Activated CD4-positive, alpha-beta T cell treated with anti-CD3 and anti-CD28 coated beads for 36 hours (primary cell): ENCODE measurements at regions of chr17 and their contacts with region 1.

Region 1: DNA sequence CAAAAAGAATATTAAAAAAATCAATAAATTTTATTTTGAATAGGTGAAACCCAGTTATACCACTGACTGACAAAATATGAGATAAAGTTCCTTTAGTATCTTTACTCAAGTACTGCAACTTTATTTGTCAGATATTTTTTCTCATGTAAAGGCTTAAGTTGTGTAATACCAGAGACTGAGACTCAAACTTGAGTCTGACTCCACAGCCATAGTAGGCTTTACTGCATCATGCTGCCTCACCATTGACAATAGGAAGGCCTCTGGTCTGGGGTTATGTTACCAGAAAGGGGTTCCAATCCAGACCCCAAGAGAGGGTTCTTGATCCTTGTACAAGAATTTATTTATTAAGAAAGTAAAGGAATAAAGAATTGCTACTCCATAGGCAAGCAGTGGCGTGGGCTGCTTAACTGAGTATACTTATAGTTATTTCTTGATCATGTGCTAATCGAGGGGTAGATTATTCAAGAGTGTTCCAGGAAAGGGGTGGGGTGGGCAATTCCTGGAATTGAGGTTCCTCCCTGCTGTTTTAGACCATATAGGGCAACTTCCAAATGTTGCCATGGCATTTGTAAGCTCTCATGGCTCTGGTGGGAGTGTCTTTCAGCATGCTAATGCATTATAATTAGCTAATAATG is 187.4 kb upstream of the WSB1 start:
- DNase-seq: no peak
- ATAC-seq: no peak
- H3K4me3 Mint-ChIP-seq: no peak overlapping the region
- H3K27ac Mint-ChIP-seq: no peak overlapping the region
- H3K4me1 Mint-ChIP-seq: no peaks in the 10 kb centered on the region
- H3K27me3 Mint-ChIP-seq: peaks cover 2% of the 10 kb centered on the region

Region 2: DNA sequence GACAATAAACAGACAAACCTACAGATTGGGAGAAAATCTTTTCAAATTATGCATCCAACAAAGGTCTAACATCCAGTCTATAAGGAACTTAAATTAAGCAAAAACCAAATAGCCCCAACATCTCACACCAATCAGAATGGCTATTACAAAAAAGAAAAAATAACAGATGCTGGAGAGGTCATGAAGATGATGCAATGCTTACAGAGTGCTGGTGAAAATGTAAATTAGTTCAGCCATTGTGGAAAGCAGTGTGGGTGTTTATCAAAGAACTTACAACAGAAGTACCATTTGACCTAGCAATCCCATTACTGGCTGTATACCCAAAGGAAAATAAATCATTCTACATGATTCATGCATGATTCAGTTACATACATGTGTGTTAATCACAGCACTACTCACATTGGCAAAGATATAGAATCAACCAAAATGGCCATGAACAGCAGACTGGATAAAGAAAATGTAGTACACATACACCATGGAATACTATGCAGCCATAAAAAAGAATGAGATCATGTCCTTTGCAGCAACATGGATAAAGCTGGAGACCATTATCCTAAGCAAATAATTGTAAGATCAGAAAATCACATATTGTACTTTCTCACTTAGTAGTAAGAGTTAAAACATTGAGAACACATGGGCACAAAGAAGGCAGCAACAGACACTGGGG is 36.5 kb before region 1 on chr17:
- CTCF ChIA-PET with region 1: no interaction called
- POLR2A ChIA-PET with region 1: no interaction called
- intact Hi-C with region 1: loop called in 1 of 2 experiments (anchors 10 kb)
- DNase-seq: no peak
- ATAC-seq: no peak
- H3K4me3 Mint-ChIP-seq: no peak overlapping the region
- H3K27ac Mint-ChIP-seq: no peak overlapping the region
- H3K4me1 Mint-ChIP-seq: no peaks in the 10 kb centered on the region
- H3K27me3 Mint-ChIP-seq: no peaks in the 10 kb centered on the region

Region 3: DNA sequence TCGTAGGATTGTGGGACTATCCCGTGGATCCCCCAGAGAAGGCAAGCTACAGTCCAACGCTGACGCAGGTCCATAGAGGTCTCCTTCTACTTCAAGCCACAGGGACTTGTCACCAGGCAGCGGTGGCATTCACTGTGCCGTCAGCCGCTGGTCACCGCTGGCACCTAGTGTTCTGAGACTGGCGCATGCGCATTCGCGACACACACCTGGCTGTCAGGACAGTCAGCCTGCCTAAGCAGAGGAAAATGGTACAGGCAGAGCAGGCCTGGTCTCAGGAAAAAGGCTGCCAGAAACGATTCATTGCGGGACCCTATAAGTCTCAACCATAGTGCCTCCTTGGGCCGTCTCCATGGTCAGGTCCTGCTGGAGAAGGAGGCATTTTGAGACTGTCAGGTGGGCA is 49.4 kb after region 1 on chr17:
- CTCF ChIA-PET with region 1: no interaction called
- POLR2A ChIA-PET with region 1: no interaction called
- intact Hi-C with region 1: loop called in 1 of 2 experiments (anchors 10 kb)
- DNase-seq: no peak
- ATAC-seq: no peak
- H3K4me3 Mint-ChIP-seq: no peak overlapping the region
- H3K27ac Mint-ChIP-seq: no peak overlapping the region
- H3K4me1 Mint-ChIP-seq: no peaks in the 10 kb centered on the region
- H3K27me3 Mint-ChIP-seq: no peaks in the 10 kb centered on the region

Region 4: DNA sequence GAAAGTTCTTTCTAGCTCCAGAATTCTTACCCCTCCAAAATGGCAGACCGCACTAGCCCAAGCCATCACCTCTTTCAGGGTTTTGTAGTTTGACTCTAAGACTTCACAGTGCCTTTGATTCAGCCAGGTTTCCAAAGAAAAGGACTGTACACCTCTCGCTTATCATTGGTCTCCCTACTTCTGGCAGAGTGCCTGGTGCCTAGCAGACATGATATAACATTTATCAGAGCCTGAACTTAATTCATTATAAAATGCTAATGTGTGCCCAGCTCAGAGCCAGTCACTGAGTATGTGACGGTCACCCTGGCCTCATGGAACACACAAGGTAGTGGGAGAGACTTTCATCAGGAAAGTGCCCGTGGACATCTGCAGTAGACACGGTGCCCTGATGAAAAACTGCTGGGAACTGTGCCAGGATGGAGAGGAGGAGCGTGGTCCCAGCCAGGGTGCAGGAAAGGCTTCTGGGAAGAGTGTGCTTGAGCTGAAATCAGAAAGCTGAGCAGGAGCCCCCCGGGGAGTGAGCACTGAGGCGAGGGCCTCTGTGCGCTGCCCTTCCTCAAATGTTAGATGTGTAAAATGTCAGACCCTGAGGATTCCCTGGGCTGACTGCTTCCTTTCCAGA is 490.2 kb after region 1 on chr17:
- CTCF ChIA-PET with region 1: no interaction called
- POLR2A ChIA-PET with region 1: no interaction called
- intact Hi-C with region 1: no loop called
- DNase-seq: no peak
- ATAC-seq: no peak
- H3K4me3 Mint-ChIP-seq: no peak overlapping the region
- H3K27ac Mint-ChIP-seq: peak overlapping the region; percentile 20
- H3K4me1 Mint-ChIP-seq: peaks cover 19% of the 10 kb centered on the region
- H3K27me3 Mint-ChIP-seq: no peaks in the 10 kb centered on the region